Sigmoid colon (tissue), 7 donors: ENCODE measurements at regions of chr2 and their contacts with region 1.

Region 1: DNA sequence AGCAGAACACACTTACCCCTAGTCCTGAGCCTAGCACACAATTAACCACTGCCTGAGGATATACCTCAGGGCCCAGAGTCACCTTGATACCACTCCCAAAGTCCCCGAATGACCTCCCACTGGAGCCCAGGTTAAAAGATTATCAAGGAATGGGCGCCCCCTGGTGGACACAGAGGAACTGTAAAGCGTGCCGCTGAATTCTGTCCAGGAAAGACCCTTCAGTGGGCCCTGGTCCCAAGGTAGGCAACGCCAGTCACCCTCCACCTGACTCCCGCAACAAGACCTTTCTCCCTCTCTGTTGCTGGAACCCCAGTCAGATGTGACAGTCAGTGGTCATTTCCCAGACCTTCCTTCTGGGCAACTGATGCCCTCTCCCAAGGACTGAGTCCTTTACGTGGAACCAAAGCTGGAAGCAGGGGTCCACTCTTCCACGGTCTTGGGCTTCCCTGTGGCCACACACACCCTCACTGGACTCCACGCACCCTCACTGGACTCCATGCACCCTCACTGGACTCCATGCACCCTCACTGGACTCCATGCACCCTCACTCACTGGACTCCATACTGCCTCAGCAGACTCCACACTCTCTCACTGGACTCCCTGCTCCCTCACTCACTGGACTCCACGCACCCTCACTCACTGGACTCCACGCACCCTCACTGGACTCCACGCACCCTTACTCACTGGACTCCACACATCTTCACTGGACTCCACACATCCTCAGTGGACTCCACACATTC is 7.1 kb downstream of the PTMA start:
- DNase-seq: peak; percentile 87
- H3K4me3 ChIP-seq: no peak overlapping the region
- H3K27ac ChIP-seq: peak overlapping the region in 3 of 4 donors; percentile 96 to 100 (median 99)
- H3K4me1 ChIP-seq: peaks cover 0 to 41% (median 38%) of the 10 kb centered on the region in 4 donors
- H3K27me3 ChIP-seq: no peaks in the 10 kb centered on the region
- CTCF ChIP-seq: peak; percentile 92 to 96 (median 94)
- EP300 ChIP-seq: no peak
- POLR2A ChIP-seq: no peak

Region 2: DNA sequence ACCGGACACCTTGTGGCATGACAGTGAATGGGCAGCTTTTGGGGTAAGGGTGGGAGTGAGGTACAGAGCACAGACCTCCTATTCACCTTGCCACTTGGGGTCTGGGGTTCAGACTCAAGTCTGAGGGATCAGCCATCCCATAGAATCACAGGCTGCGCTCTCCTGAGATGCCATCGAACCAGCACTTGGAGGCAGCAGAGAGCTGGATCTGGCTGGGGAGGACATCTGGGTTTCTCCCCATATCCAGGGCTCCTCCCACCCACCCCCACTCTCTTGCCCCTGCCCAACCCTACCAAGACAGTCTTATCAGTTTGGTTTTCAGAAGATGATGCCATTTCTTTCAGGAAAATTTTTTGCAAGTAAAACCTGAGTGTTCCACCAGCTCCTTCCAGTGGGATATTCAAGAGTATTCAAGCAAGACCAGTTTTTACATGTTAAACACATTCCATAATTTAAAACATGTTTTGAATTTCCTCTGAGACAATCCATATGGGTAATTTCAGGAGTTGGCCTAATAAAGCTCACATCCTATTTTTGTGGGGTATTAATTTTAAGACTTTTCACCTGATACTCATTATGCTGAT is 152.0 kb before region 1 on chr2:
- intact Hi-C with region 1: loop called (anchors 1 kb)
- DNase-seq: peak; percentile 77
- H3K4me3 ChIP-seq: no peak overlapping the region
- H3K27ac ChIP-seq: no peak overlapping the region
- H3K4me1 ChIP-seq: no peaks in the 10 kb centered on the region
- H3K27me3 ChIP-seq: no peaks in the 10 kb centered on the region
- CTCF ChIP-seq: peak; percentile 13 to 70 (median 40)
- EP300 ChIP-seq: no peak
- POLR2A ChIP-seq: no peak

Region 3: DNA sequence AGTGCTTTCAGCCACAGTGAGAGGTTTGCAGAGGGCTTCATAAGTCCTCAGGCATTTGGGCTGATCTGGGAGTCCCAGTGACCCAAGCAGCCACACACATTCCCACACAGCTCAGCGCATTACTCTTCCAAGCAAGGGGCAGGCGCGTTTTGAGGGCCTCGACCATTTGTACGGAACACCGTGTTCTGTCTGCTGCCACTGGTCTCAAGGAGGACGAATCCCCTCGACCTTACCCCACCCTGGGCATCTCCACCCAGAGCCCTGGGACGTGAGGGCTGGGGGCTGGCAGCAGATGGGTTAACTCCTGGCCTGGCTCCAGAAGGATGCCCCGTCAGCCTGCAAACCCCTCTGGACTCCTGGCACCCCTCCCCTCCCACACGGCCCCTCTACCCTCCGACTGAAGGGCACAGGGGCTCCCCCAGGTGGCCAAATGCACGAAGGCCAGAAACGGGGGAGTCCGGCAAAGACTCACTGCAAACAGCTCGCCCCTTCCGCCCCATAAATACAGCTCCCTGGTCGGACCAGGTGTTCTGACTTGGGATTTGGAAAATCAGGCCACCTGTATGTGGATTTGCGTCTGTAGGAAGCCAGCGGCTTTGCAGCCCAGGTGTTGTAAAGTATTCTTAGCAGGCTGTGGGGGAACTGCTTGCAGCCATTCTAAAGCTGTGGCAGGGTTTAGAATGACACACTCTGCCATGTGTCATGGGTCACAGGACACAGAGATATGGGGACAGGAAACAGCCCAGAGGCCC is 40.7 kb before region 1 on chr2:
- intact Hi-C with region 1: loop called (anchors 1 kb)
- DNase-seq: peak; percentile 90
- H3K4me3 ChIP-seq: no peak overlapping the region
- H3K27ac ChIP-seq: peak overlapping the region; percentile 90 to 94 (median 90)
- H3K4me1 ChIP-seq: peaks cover 0 to 54% (median 49%) of the 10 kb centered on the region in 4 donors
- H3K27me3 ChIP-seq: no peaks in the 10 kb centered on the region
- CTCF ChIP-seq: peak; percentile 88 to 95 (median 94)
- EP300 ChIP-seq: peak in 1 of 4 donors; percentile 62
- POLR2A ChIP-seq: no peak

Region 4: GRCh38 chr2:231701456-231702373 is 13.7 kb before region 1 on chr2:
- intact Hi-C with region 1: no loop called
- DNase-seq: peak; percentile 88
- H3K4me3 ChIP-seq: no peak overlapping the region
- H3K27ac ChIP-seq: peak overlapping the region; percentile 11 to 70 (median 32)
- H3K4me1 ChIP-seq: peaks cover 1 to 39% (median 26%) of the 10 kb centered on the region in 4 donors
- H3K27me3 ChIP-seq: no peaks in the 10 kb centered on the region
- CTCF ChIP-seq: no peak
- EP300 ChIP-seq: no peak
- POLR2A ChIP-seq: no peak